Posterior vena cava (tissue), 2 donors: ENCODE measurements at regions of chr9 and their contacts with region 1.

Region 1: GRCh38 chr9:113446323-113446740 is 17.2 kb upstream of the RGS3 start:
- DNase-seq: no peak

Region 2: DNA sequence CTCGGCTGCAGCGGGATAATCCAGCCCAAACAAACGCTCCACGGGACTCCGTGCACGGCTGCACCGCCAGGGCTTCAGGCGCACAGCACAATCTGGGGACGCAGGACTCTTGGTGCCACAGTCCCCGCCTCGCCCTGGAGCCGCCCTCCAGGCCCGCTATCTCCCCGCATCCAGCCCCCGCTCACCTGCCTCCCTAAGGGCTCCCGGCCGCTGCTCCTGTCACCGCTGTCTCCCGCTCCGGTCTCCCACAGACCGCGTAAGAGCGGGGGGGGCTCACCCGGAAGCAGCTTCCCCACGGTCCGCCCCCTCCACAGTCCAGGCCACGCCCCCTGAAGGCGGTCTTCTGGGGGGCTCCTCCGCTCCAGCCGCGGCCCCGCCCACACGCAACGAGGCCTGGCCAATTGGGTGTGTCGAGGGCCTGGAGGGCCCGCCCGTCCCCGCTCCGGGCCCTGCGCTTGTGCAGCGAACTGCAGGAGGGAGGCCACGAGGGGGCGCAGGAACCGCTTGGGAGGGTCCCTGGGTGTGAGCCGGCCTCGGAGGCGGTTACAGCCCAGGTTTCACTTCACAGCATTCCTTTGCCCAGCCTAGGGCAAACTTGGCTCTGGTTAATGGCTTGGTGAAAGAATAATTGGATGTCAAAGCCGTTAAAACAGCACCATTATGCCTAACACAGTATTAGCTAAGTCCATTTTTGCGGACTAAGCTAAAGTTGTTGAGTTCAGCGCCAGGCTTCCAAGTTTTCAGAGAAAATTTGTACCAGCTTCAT is 45.1 kb before region 1 on chr9 and contains the start of gene ALAD:
- intact Hi-C with region 1: no loop called
- DNase-seq: peak; percentile 100
- total RNA-seq, gene ALAD: 33.1 to 41.2 TPM

Region 3: GRCh38 chr9:113583551-113584427 is 137.5 kb after region 1 on chr9:
- intact Hi-C with region 1: loop called (anchors 1 to 5 kb)
- DNase-seq: no peak

Region 4: DNA sequence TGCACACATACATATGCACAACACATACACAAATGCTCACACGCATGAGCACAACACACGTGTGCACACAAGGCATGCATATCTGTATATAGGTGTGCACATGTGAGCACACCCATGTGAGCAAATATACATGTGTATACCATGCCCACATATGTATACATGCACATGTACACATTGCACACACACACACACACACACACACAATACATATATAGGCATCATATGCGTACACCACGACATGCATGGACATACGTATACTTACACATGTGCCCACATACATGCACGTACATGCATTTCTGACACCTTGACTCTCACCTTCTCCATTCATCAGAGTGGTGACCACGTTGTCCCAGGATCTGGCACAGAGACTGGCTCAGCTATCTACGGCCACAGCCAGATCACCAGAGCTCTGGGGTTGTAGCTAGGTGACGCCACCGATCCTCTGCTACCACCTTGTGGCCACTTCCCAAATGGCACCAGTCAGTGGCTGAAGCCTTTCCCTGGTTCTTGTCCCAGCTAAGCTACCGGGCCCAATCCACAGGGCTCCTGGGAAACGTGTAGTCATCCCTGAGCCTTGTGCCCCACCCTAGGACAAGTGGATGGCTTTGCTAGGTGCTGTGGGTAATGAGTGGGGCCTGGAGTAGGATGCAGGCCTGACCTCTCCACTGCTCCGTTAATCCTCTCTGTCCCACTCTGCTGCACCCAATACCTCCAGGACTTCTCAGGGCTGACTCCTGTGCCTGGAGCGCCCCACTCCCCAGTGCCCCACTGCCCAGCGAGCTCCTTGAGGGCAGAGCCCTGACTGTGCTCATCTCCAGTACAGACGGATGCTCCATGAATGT is 211.6 kb after region 1 on chr9:
- intact Hi-C with region 1: loop called (anchors 2 to 5 kb)
- DNase-seq: peak; percentile 95